GM23248 (cell line): ENCODE measurements at regions of chr17 and their contacts with region 1.

Region 1: GRCh38 chr17:57833179-57833939 is 16.5 kb downstream of the MRPS23 start:
- DNase-seq: peak; percentile 89
- H3K4me3 ChIP-seq: peak overlapping the region; percentile 78
- H3K27ac ChIP-seq: 0 out of 2 replicates have a peak overlapping the region, but pooled peaks have one; percentile 5
- H3K4me1 ChIP-seq: peaks cover 9% of the 10 kb centered on the region
- H3K27me3 ChIP-seq: no peaks in the 10 kb centered on the region

Region 2: DNA sequence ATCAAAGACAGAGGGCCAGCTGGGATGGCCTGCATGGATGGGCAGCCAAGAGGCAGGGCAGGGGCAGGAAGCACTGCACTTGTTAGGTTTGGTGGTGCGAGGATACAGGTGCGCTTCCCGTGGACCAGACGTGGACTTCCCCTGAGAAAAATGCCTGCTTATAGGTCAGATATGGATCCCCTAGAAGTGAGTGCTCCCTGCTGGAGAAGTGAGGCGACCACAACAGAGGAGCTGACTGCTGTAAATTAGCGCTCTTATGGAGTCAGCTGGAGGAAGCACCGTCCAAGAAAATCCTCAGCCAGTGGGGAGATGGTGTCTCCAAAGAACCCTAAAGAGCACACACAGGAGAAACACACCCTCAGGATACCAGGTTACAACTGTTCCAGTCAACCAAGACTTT is 60.6 kb before region 1 on chr17:
- in situ Hi-C with region 1: loop called (anchors 10 kb)
- DNase-seq: no peak
- H3K4me3 ChIP-seq: no peak overlapping the region
- H3K27ac ChIP-seq: no peak overlapping the region
- H3K4me1 ChIP-seq: no peaks in the 10 kb centered on the region
- H3K27me3 ChIP-seq: peaks cover 55% of the 10 kb centered on the region